ENCODE measurements at regions of chr1 and their contacts with region 1.

Region 1: DNA sequence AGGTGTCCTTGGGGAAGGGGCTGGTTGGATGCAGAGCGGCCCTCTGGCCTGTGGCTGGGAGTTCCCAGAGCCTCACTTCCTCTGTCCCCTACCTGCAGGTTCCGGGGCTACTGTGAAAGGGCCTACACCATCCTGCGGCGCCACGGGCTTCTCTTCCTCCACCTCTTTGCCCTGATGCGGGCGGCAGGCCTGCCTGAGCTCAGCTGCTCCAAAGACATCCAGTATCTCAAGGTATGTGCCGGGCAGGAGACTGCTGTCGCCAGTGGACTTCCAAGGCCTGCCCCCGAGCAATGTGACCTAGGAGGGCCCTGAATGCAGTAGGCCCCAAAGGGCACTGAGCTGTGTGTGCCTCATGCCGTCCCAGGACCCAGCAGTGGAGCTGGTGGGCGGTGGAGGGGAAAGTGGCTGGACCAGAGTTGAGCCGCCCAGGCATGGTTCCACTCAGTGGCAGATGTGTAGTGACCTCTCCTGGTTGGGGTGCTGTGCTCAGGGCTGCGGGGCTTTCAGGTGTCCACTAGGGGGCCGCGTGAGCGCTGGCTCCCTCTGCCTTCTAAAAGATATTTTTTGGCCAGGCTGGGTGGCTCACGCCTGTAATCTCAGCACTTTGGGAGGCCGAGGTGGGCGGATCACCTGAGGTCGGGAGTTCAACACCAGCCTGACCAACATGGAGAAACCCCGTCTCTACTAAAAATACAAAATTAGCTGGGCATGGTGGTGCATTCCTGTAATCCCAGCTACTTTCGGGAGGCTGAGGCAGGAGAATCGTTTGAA is 73.4 kb downstream of the PIK3CD start:
- DNase-seq: peak; percentile 64 to 88
- H3K4me3 ChIP-seq: no peak overlapping the region
- H3K27ac ChIP-seq: no peak overlapping the region; the same call in 1 of the 2 replicates
- H3K4me1 ChIP-seq: peaks cover 0 to 12% (median 7%) of the 10 kb centered on the region in 4 experiments; a peak in 5 of 7 replicates
- H3K27me3 ChIP-seq: no peaks in the 10 kb centered on the region
- CTCF ChIP-seq: peak in 2 of 3 experiments; percentile 95 to 99; a peak in 3 of 4 replicates
- EP300 ChIP-seq: no peak
- POLR2A ChIP-seq: no peak
- RAD21 ChIP-seq: peak; percentile 69 to 78

Region 2: GRCh38 chr1:9588551-9589143 is 136.2 kb before region 1 on chr1 and contains the start of gene TMEM201:
- CTCF ChIA-PET with region 1: no interaction called
- POLR2A ChIA-PET with region 1: no interaction called
- DNase-seq: peak; percentile 68 to 97
- H3K4me3 ChIP-seq: peak within 1 kb of the TSS; percentile 60 to 82 (median 70)
- H3K27ac ChIP-seq: no peak within 1 kb of the TSS; the same call in 1 of the 2 replicates
- H3K4me1 ChIP-seq: peaks cover 0 to 35% (median 25%) of the 10 kb centered on the region in 4 experiments; a peak in 5 of 7 replicates
- H3K27me3 ChIP-seq: no peaks in the 10 kb centered on the region
- CTCF ChIP-seq: peak in 2 of 3 experiments; percentile 61 to 74; a peak in 3 of 4 replicates
- EP300 ChIP-seq: no peak; a peak in 1 of 3 replicates
- POLR2A ChIP-seq: no peak; a peak in 1 of 3 replicates
- RAD21 ChIP-seq: peak in 1 of 2 experiments; percentile 31; a peak in 2 of 4 replicates
- total RNA-seq, gene TMEM201: 27.1 and 27.9 TPM in 2 replicates

Region 3: DNA sequence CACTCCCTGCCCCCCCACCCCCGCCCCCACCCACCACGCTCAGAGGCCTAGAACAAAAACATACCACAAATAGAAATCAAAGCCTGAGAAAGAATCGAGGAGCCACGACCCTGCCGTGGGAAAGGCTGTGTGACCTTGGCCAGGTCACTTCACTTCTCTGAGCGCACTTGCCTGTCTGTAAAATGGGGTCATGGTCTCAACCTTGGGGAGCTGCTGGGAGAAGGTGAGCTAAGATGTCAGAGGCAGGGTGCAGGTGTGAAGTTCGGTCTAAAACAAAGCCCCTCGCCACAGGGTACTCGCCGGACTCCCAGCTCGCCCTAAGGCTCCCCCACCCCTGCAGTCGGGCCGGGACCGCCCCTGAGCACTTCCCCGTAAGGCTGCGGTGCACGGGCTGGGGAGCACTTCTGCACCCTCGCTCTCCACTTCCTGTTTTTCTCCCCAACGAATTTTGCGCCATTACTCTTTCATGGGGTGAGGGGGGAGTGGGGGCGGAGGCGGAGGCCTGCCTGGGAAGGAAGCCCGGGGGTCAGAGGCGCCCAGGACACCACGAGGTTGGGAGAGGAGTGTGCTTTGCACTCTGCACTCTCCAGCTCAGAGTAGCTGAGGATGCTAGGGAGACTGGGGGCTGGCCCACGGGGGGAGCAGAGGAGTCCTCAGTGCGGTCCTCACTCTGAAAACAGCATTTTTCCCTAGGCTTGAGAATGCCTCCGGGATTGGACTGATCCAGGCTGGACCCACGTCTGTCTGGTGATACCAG is 95.3 kb before region 1 on chr1:
- CTCF ChIA-PET with region 1: interaction called, 33 read pairs
- POLR2A ChIA-PET with region 1: interaction called, 3 read pairs
- DNase-seq: peak in 1 of 2 experiments; percentile 49
- H3K4me3 ChIP-seq: no peak overlapping the region
- H3K27ac ChIP-seq: no peak overlapping the region
- H3K4me1 ChIP-seq: peaks cover 0 to 10% (median 8%) of the 10 kb centered on the region in 4 experiments; a peak in 5 of 7 replicates
- H3K27me3 ChIP-seq: peaks cover 0 to 8% (median 0%) of the 10 kb centered on the region in 4 experiments; a peak in 2 of 7 replicates
- CTCF ChIP-seq: no peak
- EP300 ChIP-seq: no peak
- POLR2A ChIP-seq: no peak
- RAD21 ChIP-seq: no peak

Region 4: DNA sequence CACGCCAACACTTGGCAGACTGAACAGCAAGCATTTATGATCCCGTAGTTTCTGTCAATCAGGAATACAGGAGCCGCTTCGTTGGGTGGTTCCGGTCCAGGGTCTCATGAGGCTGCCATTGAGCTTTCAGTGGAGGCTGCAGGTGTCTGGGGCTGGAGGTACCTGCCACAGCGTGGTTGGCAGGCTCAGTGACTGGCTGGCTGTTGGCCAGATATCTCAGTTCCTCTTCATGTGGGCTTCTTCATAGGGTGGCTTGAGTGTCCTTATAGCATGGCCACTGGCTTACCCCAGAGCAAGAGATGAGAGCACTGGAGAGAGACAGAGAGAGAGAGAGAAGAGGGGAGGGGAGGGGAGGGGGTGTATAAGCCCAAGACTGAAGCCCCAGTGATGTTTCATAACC is 44.1 kb before region 1 on chr1:
- CTCF ChIA-PET with region 1: interaction called, 13 read pairs
- POLR2A ChIA-PET with region 1: no interaction called
- DNase-seq: no peak
- H3K4me3 ChIP-seq: no peak overlapping the region
- H3K27ac ChIP-seq: no peak overlapping the region
- H3K4me1 ChIP-seq: peaks cover 0 to 2% (median 0%) of the 10 kb centered on the region in 4 experiments; a peak in 1 of 7 replicates
- H3K27me3 ChIP-seq: no peaks in the 10 kb centered on the region
- CTCF ChIP-seq: no peak
- EP300 ChIP-seq: no peak
- POLR2A ChIP-seq: no peak
- RAD21 ChIP-seq: no peak

Region 5: DNA sequence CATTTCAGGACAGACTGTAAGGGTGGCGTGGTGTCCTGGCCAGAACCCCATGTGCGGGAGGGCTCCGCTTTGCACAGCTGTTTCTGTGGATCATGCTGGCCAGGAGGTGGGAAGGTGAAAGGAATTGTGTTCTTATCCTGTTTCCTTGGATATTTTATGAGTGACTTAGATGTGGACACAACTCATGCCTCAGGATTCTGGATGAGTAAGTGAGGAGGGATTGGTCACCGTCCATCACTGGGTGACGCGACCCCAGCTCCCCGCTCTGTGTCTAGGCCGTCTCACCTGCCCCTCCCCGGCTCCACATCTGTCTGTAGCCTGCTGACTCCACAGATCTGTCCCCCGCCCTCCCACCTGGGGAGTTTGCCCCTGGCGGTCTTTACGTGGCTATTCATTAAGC is 24.6 kb before region 1 on chr1:
- CTCF ChIA-PET with region 1: interaction called, 54 read pairs
- POLR2A ChIA-PET with region 1: no interaction called
- DNase-seq: no peak
- H3K4me3 ChIP-seq: no peak overlapping the region
- H3K27ac ChIP-seq: no peak overlapping the region
- H3K4me1 ChIP-seq: peaks cover 0 to 2% (median 0%) of the 10 kb centered on the region in 4 experiments; a peak in 1 of 7 replicates
- H3K27me3 ChIP-seq: no peaks in the 10 kb centered on the region
- CTCF ChIP-seq: no peak
- EP300 ChIP-seq: no peak
- POLR2A ChIP-seq: no peak
- RAD21 ChIP-seq: no peak

Region 6: DNA sequence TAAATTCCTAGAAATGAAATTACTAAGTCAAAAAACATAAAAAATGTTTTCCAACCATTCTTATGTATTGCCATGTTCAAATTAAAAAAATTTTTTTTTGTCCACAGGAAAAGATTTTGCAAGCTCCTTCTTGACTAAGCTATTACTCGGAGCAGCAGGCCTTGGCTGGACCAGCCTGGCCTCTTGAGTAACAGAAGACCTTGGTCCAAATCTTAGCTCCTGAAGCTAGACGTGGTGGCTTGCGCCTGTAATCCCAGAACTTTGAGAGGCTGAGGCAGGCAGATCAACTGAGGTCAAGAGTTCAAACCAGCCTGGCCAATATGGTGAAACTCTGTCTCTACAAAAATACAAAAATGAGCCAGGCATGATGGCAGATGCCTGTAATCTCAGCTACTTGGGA is 21.3 kb after region 1 on chr1:
- CTCF ChIA-PET with region 1: interaction called, 18 read pairs
- POLR2A ChIA-PET with region 1: no interaction called
- DNase-seq: no peak
- H3K4me3 ChIP-seq: no peak overlapping the region
- H3K27ac ChIP-seq: no peak overlapping the region
- H3K4me1 ChIP-seq: no peaks in the 10 kb centered on the region
- H3K27me3 ChIP-seq: no peaks in the 10 kb centered on the region
- CTCF ChIP-seq: no peak
- EP300 ChIP-seq: no peak
- POLR2A ChIP-seq: no peak
- RAD21 ChIP-seq: no peak

Region 7: DNA sequence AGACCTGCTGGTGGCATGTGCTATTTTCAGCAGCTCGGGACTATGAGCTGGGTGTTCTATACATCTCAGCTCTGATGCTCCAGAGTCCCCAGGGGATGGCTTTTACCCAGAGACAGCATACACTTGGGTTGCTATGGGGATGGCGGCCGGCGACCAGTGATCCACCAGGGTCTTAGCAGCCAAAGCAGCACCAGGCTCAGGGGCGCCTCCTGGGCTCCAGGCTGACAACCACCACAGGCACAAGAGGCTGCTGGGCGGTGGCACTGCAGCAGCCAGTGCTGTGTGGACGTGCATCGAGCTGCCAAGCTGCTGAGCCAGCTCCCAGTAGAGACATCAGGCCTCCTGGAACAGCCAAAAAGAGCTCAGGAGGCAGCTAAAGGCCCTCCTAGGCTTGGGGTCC is 136.5 kb after region 1 on chr1:
- CTCF ChIA-PET with region 1: interaction called, 91 read pairs
- POLR2A ChIA-PET with region 1: no interaction called
- DNase-seq: no peak
- H3K4me3 ChIP-seq: no peak overlapping the region
- H3K27ac ChIP-seq: no peak overlapping the region
- H3K4me1 ChIP-seq: peaks cover 0 to 9% (median 7%) of the 10 kb centered on the region in 4 experiments; a peak in 6 of 7 replicates
- H3K27me3 ChIP-seq: no peaks in the 10 kb centered on the region
- CTCF ChIP-seq: peak; percentile 47 to 53 (median 48)
- EP300 ChIP-seq: no peak
- POLR2A ChIP-seq: no peak
- RAD21 ChIP-seq: peak; percentile 45 to 64